Endothelial cell of umbilical vein (primary cell): ENCODE measurements at regions of chr1 and their contacts with region 1.

Region 1: DNA sequence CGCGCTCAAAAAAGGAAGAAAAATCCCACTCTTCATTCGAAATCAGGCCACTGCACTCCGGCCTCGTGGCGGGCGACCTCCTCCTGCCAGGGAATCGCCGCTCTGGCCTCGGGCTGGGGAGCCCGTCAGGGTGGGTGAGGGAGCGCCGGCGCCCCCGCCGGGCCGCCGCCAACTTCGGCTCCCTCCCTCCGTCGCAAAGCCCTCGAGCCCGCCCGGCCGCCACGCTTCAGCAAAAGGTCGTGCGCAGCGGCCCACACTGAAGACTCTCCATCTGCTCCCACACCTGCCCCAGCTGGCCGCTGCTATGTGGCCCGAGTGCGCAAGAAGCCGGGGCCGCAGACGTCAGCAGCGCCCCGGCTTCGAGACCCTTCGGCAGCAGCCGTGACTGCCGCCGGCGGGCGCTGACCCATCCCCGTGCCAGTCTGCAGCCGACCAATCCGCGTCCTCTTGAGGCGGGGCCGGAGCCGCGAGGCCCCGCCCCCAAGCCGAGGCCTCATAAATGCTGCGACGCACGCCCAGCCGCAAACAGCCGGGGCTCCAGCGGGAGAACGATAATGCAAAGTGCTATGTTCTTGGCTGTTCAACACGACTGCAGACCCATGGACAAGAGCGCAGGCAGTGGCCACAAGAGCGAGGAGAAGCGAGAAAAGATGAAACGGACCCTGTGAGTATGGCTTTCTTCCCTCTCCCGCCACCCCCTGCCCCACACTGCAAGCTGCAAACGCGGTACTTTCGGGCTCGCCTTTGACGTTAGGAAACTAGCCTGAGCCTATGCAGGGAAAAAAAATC is at the start of gene RGS2:
- DNase-seq: peak; percentile 95
- H3K4me3 ChIP-seq: peak within 1 kb of the TSS; percentile 71 to 87 (median 74)
- H3K27ac ChIP-seq: peak within 1 kb of the TSS; percentile 97
- H3K4me1 ChIP-seq: peaks cover 38% of the 10 kb centered on the region
- H3K27me3 ChIP-seq: no peaks in the 10 kb centered on the region
- CTCF ChIP-seq: peak in 1 of 2 donors; percentile 15
- POLR2A ChIP-seq: peak; percentile 100
- total RNA-seq, gene RGS2: 9.1 and 9.5 TPM in 2 replicates

Region 2: GRCh38 chr1:192559115-192560006 is 249.4 kb before region 1 on chr1:
- CTCF ChIA-PET with region 1: no interaction called
- POLR2A ChIA-PET with region 1: no interaction called
- dilution Hi-C with region 1: no loop called
- intact Hi-C with region 1: loop called (anchors 5 kb)
- DNase-seq: peak; percentile 96
- H3K4me3 ChIP-seq: no peak overlapping the region
- H3K27ac ChIP-seq: peak overlapping the region; percentile 91
- H3K4me1 ChIP-seq: peaks cover 24% of the 10 kb centered on the region
- H3K27me3 ChIP-seq: no peaks in the 10 kb centered on the region
- CTCF ChIP-seq: no peak
- POLR2A ChIP-seq: no peak

Region 3: DNA sequence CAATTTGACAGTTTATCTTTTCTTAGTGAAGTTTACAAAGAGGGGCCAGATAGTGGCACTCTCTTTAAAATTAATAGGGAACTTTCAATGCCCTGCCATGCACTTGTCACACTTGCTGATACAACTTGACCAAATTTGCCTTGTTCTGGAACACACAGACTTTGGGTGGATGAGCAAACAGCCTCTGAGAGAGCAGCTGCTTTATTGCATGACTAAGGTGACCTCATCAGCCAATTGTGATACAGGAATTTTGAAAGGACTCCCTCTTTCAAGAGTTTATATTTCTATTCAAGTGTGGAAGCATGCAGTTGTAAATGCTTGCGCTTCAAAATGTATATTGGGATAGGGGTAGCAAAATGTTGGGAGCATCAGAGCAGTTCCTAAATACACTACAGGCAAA is 235.2 kb before region 1 on chr1:
- CTCF ChIA-PET with region 1: no interaction called
- POLR2A ChIA-PET with region 1: no interaction called
- dilution Hi-C with region 1: no loop called
- intact Hi-C with region 1: no loop called
- DNase-seq: no peak
- H3K4me3 ChIP-seq: no peak overlapping the region
- H3K27ac ChIP-seq: no peak overlapping the region
- H3K4me1 ChIP-seq: no peaks in the 10 kb centered on the region
- H3K27me3 ChIP-seq: no peaks in the 10 kb centered on the region
- CTCF ChIP-seq: no peak
- POLR2A ChIP-seq: no peak

Region 4: DNA sequence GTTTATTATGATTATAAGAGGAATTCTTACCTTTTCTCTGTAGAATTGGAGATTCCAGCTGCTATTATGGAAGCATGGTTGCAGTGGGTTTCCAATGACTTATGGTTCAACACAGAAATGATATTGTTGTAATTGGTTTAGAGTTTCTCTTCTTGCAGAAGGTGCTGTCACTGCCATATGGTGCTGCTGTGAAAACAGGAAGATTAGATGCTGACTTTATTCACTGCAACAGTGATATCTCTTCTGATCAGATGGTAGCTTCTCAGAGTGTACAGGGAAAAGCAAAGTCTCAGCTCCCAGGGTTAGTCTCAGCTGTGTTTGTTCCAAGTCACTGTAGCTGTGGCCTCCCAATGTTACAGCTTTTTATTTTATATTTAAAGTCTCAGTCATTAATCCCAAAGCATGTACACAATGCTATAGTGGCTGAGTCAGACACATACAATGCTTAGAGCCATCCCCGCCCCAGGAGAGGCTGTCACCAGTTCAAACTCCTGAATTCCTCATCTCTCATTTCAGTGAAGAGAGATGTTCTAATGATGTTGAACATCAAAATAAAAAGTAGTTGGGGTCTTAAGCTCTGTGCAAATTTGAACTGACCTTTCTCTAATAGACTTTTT is 42.6 kb before region 1 on chr1:
- CTCF ChIA-PET with region 1: no interaction called
- POLR2A ChIA-PET with region 1: no interaction called
- dilution Hi-C with region 1: no loop called
- intact Hi-C with region 1: no loop called
- DNase-seq: no peak
- H3K4me3 ChIP-seq: no peak overlapping the region
- H3K27ac ChIP-seq: no peak overlapping the region
- H3K4me1 ChIP-seq: no peaks in the 10 kb centered on the region
- H3K27me3 ChIP-seq: no peaks in the 10 kb centered on the region
- CTCF ChIP-seq: no peak
- POLR2A ChIP-seq: no peak

Region 5: DNA sequence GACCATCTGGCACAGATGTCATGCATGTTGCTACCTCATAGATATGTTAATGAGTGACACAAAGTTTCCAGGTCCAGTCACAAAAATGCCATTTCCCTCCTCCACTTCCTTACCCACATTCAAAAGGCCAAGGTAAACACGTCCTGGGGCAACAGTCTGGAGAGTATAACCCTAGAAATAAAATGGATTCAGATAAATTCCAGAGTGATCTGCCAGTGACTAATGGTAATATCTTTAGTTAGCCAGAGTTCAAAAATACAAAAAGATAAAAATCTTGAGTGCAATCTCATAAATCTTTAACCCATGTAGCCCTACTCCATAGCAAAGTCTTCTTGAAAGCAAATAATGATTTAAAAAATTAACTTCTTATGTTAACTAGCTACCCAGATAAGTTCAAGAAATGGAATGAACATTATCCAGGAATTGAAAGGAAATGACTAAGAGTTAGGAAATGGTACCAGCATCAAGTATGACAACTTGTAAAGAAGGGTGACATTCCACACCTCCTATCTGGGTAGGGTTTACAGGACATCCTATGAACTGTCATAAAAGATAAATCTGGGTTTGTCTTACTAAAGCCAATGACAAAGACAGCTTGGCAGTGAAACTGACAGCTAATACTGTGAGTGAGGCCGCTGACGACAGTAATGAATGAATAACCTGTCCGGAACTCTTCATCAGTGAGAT is 18.2 kb after region 1 on chr1:
- CTCF ChIA-PET with region 1: interaction called, 3 read pairs
- POLR2A ChIA-PET with region 1: no interaction called
- dilution Hi-C with region 1: no loop called
- intact Hi-C with region 1: loop called (anchors 1 kb)
- DNase-seq: peak; percentile 85
- H3K4me3 ChIP-seq: no peak overlapping the region
- H3K27ac ChIP-seq: peak overlapping the region; percentile 56
- H3K4me1 ChIP-seq: peaks cover 22% of the 10 kb centered on the region
- H3K27me3 ChIP-seq: no peaks in the 10 kb centered on the region
- CTCF ChIP-seq: no peak
- POLR2A ChIP-seq: no peak

Region 6: GRCh38 chr1:192967901-192968300 is 159.2 kb after region 1 on chr1:
- CTCF ChIA-PET with region 1: interaction called, 11 read pairs
- POLR2A ChIA-PET with region 1: interaction called, 10 read pairs
- dilution Hi-C with region 1: no loop called
- intact Hi-C with region 1: loop called (anchors 1 kb)
- DNase-seq: peak; percentile 51
- H3K4me3 ChIP-seq: peak overlapping the region in 1 of 3 experiments; percentile 22
- H3K27ac ChIP-seq: peak overlapping the region; percentile 93
- H3K4me1 ChIP-seq: peaks cover 25% of the 10 kb centered on the region
- H3K27me3 ChIP-seq: no peaks in the 10 kb centered on the region
- CTCF ChIP-seq: no peak
- POLR2A ChIP-seq: no peak

Region 7: DNA sequence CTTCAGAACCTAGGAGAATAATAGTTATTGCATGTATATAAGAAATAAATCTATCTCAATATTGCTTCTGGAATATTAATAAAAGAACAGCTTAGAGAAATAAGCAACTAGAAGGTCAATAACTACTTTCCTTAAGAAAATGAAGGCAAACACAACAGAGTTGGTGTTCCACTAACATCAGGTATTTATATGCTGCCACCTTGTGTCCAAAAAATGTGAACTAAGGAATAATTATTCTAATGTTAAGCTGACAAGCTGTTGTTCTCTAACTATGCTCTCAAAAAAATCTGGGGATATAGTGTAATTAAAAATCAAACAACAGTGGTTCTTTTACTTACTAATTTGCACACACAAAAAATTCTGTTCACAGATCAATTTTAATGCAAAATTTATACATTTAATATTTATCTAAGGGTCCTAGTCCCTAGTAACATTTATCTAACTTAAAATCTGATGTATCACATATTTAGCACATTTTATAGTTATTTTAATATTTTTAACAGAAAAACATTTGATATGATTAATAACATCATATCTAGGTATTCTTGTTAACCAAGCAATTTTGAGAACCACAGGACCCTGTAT is 210.8 kb after region 1 on chr1:
- CTCF ChIA-PET with region 1: interaction called, 550 read pairs
- POLR2A ChIA-PET with region 1: interaction called, 9 read pairs
- dilution Hi-C with region 1: loop called (anchors 25 kb)
- intact Hi-C with region 1: loop called (anchors 1 kb)
- DNase-seq: peak; percentile 76
- H3K4me3 ChIP-seq: no peak overlapping the region
- H3K27ac ChIP-seq: no peak overlapping the region
- H3K4me1 ChIP-seq: peaks cover 4% of the 10 kb centered on the region
- H3K27me3 ChIP-seq: no peaks in the 10 kb centered on the region
- CTCF ChIP-seq: peak; percentile 12 to 19
- POLR2A ChIP-seq: no peak

Region 8: GRCh38 chr1:193059268-193060225 is 250.8 kb after region 1 on chr1 and contains the starts of genes RO60 and UCHL5:
- CTCF ChIA-PET with region 1: interaction called, 8 read pairs
- POLR2A ChIA-PET with region 1: interaction called, 7 read pairs
- dilution Hi-C with region 1: no loop called
- intact Hi-C with region 1: loop called (anchors 1 kb)
- DNase-seq: peak; percentile 99
- H3K4me3 ChIP-seq: peak within 1 kb of the TSS; percentile 49 to 86 (median 78)
- H3K27ac ChIP-seq: peak within 1 kb of the TSS; percentile 65
- H3K4me1 ChIP-seq: peaks cover 29% of the 10 kb centered on the region
- H3K27me3 ChIP-seq: no peaks in the 10 kb centered on the region
- CTCF ChIP-seq: no peak
- POLR2A ChIP-seq: peak; percentile 85
- total RNA-seq, gene RO60: 60.3 and 61.8 TPM in 2 replicates
- total RNA-seq, gene UCHL5: 45.6 and 50.8 TPM in 2 replicates

Region 9: DNA sequence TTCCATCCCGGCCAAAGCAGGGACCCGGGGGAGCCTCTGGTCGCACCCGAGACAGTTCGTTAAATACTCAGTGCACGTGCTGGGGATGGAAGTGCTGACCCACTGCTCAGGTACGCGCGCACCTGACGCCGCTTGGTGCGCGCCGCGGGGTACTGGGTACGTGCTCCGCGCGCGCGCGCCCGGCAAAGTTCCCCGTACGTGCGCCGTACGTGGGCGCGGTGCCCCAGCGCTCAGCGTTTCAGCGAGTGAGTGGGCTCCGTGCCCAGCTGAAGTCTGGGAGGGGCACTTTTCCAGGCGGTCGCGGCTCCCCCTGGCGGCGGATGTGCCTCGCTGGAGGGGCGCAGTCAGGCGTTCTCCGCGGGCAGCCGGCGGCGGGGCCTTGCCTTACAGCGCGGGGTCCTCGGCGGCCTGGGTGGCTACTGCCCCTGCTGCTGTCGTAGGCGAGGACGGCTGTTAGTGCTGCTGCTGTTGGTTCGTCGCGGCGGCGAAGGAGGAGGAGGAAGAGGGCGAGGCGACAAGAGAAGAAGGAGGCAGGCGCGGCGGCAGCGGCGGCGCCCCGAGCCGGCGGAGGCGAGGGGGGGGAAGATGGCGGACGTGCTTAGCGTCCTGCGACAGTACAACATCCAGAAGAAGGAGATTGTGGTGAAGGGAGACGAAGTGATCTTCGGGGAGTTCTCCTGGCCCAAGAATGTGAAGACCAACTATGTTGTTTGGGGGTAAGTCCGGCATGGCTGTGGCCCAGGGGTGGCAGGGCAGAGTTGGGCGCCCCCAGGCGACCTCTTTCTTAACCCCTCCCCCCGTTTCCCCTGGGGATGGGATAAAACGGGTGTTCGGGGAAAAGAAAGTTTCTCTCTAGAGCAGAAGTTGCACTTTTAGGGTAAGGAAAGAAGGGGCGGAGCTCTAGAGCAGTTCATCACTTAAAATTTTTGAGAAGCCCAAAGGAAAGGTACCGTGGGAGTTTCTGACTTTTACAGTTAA is 313.2 kb after region 1 on chr1 and contains the start of gene CDC73:
- CTCF ChIA-PET with region 1: interaction called, 8 read pairs
- POLR2A ChIA-PET with region 1: no interaction called
- dilution Hi-C with region 1: no loop called
- intact Hi-C with region 1: loop called (anchors 1 kb)
- DNase-seq: peak; percentile 97
- H3K4me3 ChIP-seq: peak within 1 kb of the TSS; percentile 77 to 96 (median 86)
- H3K27ac ChIP-seq: peak within 1 kb of the TSS; percentile 61
- H3K4me1 ChIP-seq: peaks cover 20% of the 10 kb centered on the region
- H3K27me3 ChIP-seq: no peaks in the 10 kb centered on the region
- CTCF ChIP-seq: peak; percentile 95 to 98
- POLR2A ChIP-seq: peak; percentile 70
- total RNA-seq, gene CDC73: 55.3 and 55.8 TPM in 2 replicates